ENCODE measurements at regions of chr5 and their contacts with region 1.

Region 1: DNA sequence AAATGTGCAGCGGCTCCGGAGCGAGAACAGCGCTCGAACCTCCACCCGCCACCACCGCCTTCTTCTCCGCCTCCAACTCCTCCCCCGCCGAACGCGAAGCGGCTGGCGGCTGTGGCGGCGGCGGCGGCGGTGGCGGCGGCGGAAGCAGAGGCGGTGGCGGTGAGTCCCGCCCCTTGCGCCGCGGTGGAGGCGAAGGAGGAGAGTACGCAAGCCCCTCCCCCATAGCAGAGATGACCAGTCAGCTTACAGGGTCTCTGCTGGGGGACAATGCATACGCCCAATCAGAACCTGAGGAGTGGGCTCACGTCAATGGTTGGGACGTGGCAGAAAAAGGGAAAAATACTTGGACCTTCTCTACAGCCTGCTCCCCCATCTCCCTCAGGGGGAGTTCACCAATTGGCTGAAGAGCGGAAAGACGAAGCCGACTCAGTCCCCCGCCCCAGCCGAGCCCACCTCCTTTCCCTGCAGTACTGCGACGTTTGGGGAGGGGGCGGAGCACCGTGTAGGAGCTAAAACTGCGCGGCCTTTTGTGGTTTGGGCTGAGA is at the start of gene PJA2:
- DNase-seq: peak; percentile 99
- ATAC-seq: peak; percentile 86
- H3K4me3 ChIP-seq: peak within 1 kb of the TSS; percentile 94 to 98 (median 96)
- H3K4me3 Mint-ChIP-seq: peak within 1 kb of the TSS; percentile 99
- H3K27ac ChIP-seq: peak within 1 kb of the TSS; percentile 96 to 99
- H3K27ac Mint-ChIP-seq: peak within 1 kb of the TSS; percentile 99
- H3K4me1 ChIP-seq: peaks cover 13 to 36% of the 10 kb centered on the region in 2 donors
- H3K4me1 Mint-ChIP-seq: peaks cover 43% of the 10 kb centered on the region
- H3K27me3 ChIP-seq: no peaks in the 10 kb centered on the region
- H3K27me3 Mint-ChIP-seq: no peaks in the 10 kb centered on the region
- CTCF ChIP-seq: peak; percentile 21
- total RNA-seq, gene PJA2: 90.4 and 92.7 TPM in 2 replicates

Region 2: GRCh38 chr5:108381954-108382783 is 1027.7 kb before region 1 on chr5 and contains the start of gene FBXL17:
- CTCF ChIA-PET with region 1: interaction called, 3 read pairs
- POLR2A ChIA-PET with region 1: interaction called, 15 read pairs
- intact Hi-C with region 1: loop called (anchors 1 kb)
- DNase-seq: peak; percentile 96
- ATAC-seq: peak; percentile 70
- H3K4me3 ChIP-seq: peak within 1 kb of the TSS; percentile 64 to 99 (median 87)
- H3K4me3 Mint-ChIP-seq: peak within 1 kb of the TSS; percentile 87
- H3K27ac ChIP-seq: peak within 1 kb of the TSS; percentile 91 to 97
- H3K27ac Mint-ChIP-seq: peak within 1 kb of the TSS; percentile 94
- H3K4me1 ChIP-seq: peaks cover 17 to 20% of the 10 kb centered on the region in 2 donors
- H3K4me1 Mint-ChIP-seq: peaks cover 35% of the 10 kb centered on the region
- H3K27me3 ChIP-seq: no peaks in the 10 kb centered on the region
- H3K27me3 Mint-ChIP-seq: no peaks in the 10 kb centered on the region
- CTCF ChIP-seq: no peak
- total RNA-seq, gene FBXL17: 38.1 and 40.3 TPM in 2 replicates

Region 3: GRCh38 chr5:108748401-108749127 is 661.4 kb before region 1 on chr5:
- CTCF ChIA-PET with region 1: no interaction called
- POLR2A ChIA-PET with region 1: interaction called, 8 read pairs
- intact Hi-C with region 1: loop called (anchors 1 kb)
- DNase-seq: peak; percentile 98
- ATAC-seq: peak; percentile 91
- H3K4me3 ChIP-seq: peak overlapping the region; percentile 74 to 90 (median 83)
- H3K4me3 Mint-ChIP-seq: peak overlapping the region; percentile 92
- H3K27ac ChIP-seq: peak overlapping the region; percentile 91 to 94
- H3K27ac Mint-ChIP-seq: peak overlapping the region; percentile 86
- H3K4me1 ChIP-seq: peaks cover 14 to 17% of the 10 kb centered on the region in 2 donors
- H3K4me1 Mint-ChIP-seq: peaks cover 10% of the 10 kb centered on the region
- H3K27me3 ChIP-seq: no peaks in the 10 kb centered on the region
- H3K27me3 Mint-ChIP-seq: no peaks in the 10 kb centered on the region
- CTCF ChIP-seq: no peak

Region 4: DNA sequence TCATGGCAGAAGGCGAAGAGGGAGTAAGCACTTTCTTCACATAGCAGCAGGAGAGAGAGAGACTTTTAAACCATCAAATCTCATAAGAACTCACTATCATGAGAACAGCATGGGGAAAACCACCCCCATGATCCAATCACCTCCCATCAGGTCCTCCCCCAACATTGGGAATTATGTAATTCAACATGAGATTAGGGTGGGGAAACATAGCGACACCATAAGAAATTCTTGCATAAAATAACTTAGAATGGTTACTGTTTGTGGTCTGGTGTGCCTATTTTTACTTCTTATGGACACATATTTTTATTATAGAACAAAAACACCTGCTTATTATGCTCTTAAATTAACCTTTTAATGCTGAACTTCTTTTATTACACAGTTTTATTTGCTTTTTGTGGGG is 298.2 kb before region 1 on chr5:
- CTCF ChIA-PET with region 1: no interaction called
- POLR2A ChIA-PET with region 1: no interaction called
- intact Hi-C with region 1: no loop called
- DNase-seq: no peak
- ATAC-seq: no peak
- H3K4me3 ChIP-seq: no peak overlapping the region
- H3K4me3 Mint-ChIP-seq: no peak overlapping the region
- H3K27ac ChIP-seq: no peak overlapping the region
- H3K27ac Mint-ChIP-seq: no peak overlapping the region
- H3K4me1 ChIP-seq: no peaks in the 10 kb centered on the region
- H3K4me1 Mint-ChIP-seq: no peaks in the 10 kb centered on the region
- H3K27me3 ChIP-seq: no peaks in the 10 kb centered on the region
- H3K27me3 Mint-ChIP-seq: no peaks in the 10 kb centered on the region
- CTCF ChIP-seq: no peak

Region 5: DNA sequence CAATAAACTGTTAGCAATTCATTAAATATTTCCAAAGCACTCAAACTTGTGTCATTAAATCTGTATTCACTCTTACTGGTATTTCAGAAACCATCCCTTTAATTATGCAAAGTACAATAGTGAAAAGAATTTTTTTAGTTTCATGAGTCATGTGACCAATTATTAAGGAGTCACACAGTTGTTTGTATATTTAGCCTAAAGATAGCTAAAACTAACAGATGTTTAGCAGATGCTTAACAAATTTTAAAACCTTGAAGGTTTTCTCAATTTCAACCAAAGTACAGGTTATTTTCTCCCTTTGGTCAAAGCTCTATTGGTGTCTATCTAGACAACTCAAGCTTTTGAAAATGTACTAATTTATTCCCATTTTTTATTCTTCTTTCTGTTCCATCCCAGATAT is 44.3 kb before region 1 on chr5:
- CTCF ChIA-PET with region 1: no interaction called
- POLR2A ChIA-PET with region 1: no interaction called
- intact Hi-C with region 1: loop called (anchors 5 kb)
- DNase-seq: no peak
- ATAC-seq: no peak
- H3K4me3 ChIP-seq: no peak overlapping the region
- H3K4me3 Mint-ChIP-seq: no peak overlapping the region
- H3K27ac ChIP-seq: no peak overlapping the region
- H3K27ac Mint-ChIP-seq: no peak overlapping the region
- H3K4me1 ChIP-seq: no peaks in the 10 kb centered on the region
- H3K4me1 Mint-ChIP-seq: peaks cover 4% of the 10 kb centered on the region
- H3K27me3 ChIP-seq: no peaks in the 10 kb centered on the region
- H3K27me3 Mint-ChIP-seq: no peaks in the 10 kb centered on the region
- CTCF ChIP-seq: no peak

Region 6: GRCh38 chr5:109378095-109378494 is 31.8 kb before region 1 on chr5:
- CTCF ChIA-PET with region 1: no interaction called
- POLR2A ChIA-PET with region 1: no interaction called
- intact Hi-C with region 1: no loop called
- DNase-seq: no peak
- ATAC-seq: no peak
- H3K4me3 ChIP-seq: no peak overlapping the region
- H3K4me3 Mint-ChIP-seq: no peak overlapping the region
- H3K27ac ChIP-seq: no peak overlapping the region
- H3K27ac Mint-ChIP-seq: no peak overlapping the region
- H3K4me1 ChIP-seq: no peaks in the 10 kb centered on the region
- H3K4me1 Mint-ChIP-seq: peaks cover 11% of the 10 kb centered on the region
- H3K27me3 ChIP-seq: no peaks in the 10 kb centered on the region
- H3K27me3 Mint-ChIP-seq: no peaks in the 10 kb centered on the region
- CTCF ChIP-seq: no peak

Region 7: DNA sequence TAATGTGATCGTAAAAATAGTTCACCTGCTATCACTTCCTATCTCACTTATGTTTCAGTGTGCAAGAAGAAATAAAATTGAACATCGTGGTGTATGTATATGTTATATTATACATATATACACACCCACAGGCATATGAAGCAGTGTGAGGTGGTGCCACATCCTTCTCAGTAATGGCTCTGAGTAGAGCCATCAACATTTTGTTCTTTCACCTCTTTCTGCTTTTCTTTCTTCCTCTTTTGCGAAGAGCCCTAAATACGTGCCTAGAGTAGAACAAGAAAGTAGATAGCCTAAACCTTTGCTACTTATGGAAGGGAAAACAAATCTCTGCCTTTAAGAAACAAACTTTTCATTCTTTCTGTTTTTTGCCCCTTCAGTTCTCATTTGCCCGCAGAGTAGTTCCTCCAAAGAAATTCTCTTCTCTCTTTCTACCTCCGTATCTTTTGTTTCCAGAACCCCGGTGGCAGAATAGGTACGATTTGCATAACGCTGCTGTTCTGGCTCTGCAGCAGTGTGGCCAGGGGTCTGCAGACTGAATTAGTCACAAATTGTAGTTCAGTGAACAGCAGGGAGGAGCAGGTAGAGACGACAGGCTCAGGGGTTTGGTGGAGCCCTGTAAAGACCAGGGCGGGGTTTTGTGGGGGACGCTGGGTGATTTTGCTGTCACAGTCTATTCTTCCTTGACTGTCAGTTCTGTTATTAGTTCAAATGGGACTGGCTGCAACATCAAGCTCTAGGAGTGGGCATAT is 40.4 kb after region 1 on chr5:
- CTCF ChIA-PET with region 1: no interaction called
- POLR2A ChIA-PET with region 1: no interaction called
- intact Hi-C with region 1: no loop called
- DNase-seq: peak; percentile 19
- ATAC-seq: peak; percentile 31
- H3K4me3 ChIP-seq: peak overlapping the region in 3 of 5 experiments; percentile 10 to 40 (median 35)
- H3K4me3 Mint-ChIP-seq: peak overlapping the region; percentile 75
- H3K27ac ChIP-seq: peak overlapping the region in 1 of 2 donors; percentile 14
- H3K27ac Mint-ChIP-seq: no peak overlapping the region
- H3K4me1 ChIP-seq: no peaks in the 10 kb centered on the region
- H3K4me1 Mint-ChIP-seq: peaks cover 9% of the 10 kb centered on the region
- H3K27me3 ChIP-seq: peaks cover 0 to 7% (median 0%) of the 10 kb centered on the region in 4 experiments
- H3K27me3 Mint-ChIP-seq: peaks cover 4% of the 10 kb centered on the region
- CTCF ChIP-seq: no peak

Region 8: DNA sequence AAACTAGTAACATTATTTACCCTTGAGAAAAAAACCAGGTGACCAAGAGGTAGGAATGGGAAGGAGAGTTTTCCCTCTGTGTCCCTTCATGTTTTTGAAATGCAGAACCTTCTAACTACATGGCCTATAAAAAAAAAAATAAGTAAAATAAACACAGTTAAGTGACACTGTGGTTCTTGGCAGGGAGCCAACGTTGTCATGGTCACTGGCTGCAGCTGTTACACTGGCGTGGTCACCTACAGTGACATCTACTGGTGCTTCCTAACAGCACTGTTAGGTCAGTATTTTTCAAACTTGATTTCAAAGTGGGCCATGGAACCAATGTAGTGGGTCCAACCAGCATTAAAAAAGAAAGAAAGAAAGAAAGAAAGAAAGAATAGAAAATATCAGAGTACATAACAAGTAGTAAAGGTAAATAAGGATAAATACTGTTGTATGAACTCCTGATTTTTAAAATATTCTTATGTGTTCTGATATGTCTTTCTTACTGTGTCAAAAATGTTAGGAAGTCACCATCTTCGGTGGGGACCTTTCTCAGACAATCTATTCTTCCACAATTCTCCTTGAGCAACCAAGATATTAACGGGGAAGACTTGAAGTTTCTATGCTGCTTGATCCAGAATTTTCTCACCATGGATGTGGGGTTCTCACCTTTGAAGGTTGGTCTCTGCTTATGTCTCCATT is 59.0 kb after region 1 on chr5:
- CTCF ChIA-PET with region 1: no interaction called
- POLR2A ChIA-PET with region 1: interaction called, 3 read pairs
- intact Hi-C with region 1: loop called (anchors 2 kb)
- DNase-seq: peak; percentile 87
- ATAC-seq: peak; percentile 97
- H3K4me3 ChIP-seq: no peak overlapping the region
- H3K4me3 Mint-ChIP-seq: no peak overlapping the region
- H3K27ac ChIP-seq: no peak overlapping the region
- H3K27ac Mint-ChIP-seq: no peak overlapping the region
- H3K4me1 ChIP-seq: peaks cover 0 to 3% of the 10 kb centered on the region in 2 donors
- H3K4me1 Mint-ChIP-seq: peaks cover 5% of the 10 kb centered on the region
- H3K27me3 ChIP-seq: no peaks in the 10 kb centered on the region
- H3K27me3 Mint-ChIP-seq: no peaks in the 10 kb centered on the region
- CTCF ChIP-seq: peak; percentile 70

Region 9: DNA sequence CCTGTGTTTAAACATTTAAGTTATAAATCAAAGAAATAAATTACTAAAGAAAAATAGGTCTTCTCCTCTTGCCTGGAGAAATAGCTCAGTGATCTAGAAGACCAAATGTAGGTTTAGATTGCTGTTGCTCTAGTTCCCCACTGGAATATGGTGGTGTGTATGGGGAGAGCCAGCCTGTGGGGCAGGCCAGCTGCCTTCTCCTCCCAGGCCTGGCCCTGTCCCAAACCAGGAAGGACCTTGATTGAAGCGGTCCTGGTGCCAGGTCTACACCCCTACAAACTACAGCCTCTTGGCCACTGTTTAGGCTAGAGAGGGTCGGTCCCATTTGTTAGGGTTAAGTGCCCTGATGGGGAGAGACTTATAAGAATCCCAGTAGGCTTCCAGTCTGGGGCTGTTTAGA is 315.2 kb after region 1 on chr5:
- CTCF ChIA-PET with region 1: no interaction called
- POLR2A ChIA-PET with region 1: no interaction called
- intact Hi-C with region 1: no loop called
- DNase-seq: no peak
- ATAC-seq: no peak
- H3K4me3 ChIP-seq: no peak overlapping the region
- H3K4me3 Mint-ChIP-seq: no peak overlapping the region
- H3K27ac ChIP-seq: no peak overlapping the region
- H3K27ac Mint-ChIP-seq: no peak overlapping the region
- H3K4me1 ChIP-seq: no peaks in the 10 kb centered on the region
- H3K4me1 Mint-ChIP-seq: peaks cover 10% of the 10 kb centered on the region
- H3K27me3 ChIP-seq: no peaks in the 10 kb centered on the region
- H3K27me3 Mint-ChIP-seq: no peaks in the 10 kb centered on the region
- CTCF ChIP-seq: no peak

Measured in B cell (primary cell).